ENCODE measurements at regions of chr11 and their contacts with region 1.

Region 1: GRCh38 chr11:43880640-43881159 is at the start of gene ALKBH3:
- H3K4me3 Mint-ChIP-seq: peak within 1 kb of the TSS; percentile 88
- H3K27ac Mint-ChIP-seq: peak within 1 kb of the TSS; percentile 88
- H3K4me1 Mint-ChIP-seq: peaks cover 14% of the 10 kb centered on the region
- H3K27me3 Mint-ChIP-seq: peaks cover 26% of the 10 kb centered on the region

Region 2: GRCh38 chr11:43643898-43644620 is 236.6 kb before region 1 on chr11:
- intact Hi-C with region 1: loop called (anchors 2 kb)
- H3K4me3 Mint-ChIP-seq: peak overlapping the region; percentile 96
- H3K27ac Mint-ChIP-seq: peak overlapping the region; percentile 91
- H3K4me1 Mint-ChIP-seq: peaks cover 11% of the 10 kb centered on the region
- H3K27me3 Mint-ChIP-seq: peaks cover 12% of the 10 kb centered on the region

Region 3: DNA sequence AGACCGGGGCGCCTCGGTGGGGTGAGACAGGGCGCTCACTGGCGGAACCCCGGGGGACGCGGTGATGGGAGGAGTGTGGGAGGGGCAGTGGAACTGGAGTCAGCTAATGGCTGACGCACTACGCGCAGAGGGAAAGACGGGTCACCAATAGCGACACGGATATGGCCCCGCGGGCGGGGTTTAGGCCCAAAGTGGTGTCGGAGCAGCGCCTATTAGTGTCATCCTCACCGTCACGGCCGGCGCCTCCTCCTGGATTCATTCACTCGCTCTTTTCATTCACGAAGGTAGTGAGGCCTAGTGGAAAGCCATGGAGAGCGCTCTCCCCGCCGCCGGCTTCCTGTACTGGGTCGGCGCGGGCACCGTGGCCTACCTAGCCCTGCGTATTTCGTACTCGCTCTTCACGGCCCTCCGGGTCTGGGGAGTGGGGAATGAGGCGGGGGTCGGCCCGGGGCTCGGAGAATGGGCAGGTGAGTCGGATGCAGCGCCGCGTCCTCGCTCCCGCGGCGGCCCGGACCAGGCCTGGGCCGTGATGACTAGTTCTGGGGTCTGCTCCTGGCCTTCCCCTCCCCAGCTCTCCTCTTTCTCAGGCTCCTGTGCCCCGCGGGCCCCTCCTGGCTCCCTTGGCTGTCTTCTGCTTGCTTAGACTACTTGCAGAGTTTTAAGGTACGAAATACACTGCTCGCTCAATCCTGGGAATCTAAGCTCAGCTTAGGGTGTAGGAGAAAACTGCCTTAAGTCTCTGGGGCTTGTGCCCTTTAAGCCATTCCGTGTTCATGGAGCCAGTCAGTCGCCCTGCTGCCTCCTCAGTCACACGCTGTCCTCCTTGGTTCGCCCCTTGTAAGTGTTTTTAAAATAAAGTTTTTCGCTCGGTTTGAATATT is 199.9 kb before region 1 on chr11 and contains the start of gene HSD17B12:
- intact Hi-C with region 1: loop called (anchors 1 kb)
- H3K4me3 Mint-ChIP-seq: peak within 1 kb of the TSS; percentile 90
- H3K27ac Mint-ChIP-seq: peak within 1 kb of the TSS; percentile 98
- H3K4me1 Mint-ChIP-seq: peaks cover 24% of the 10 kb centered on the region
- H3K27me3 Mint-ChIP-seq: peaks cover 13% of the 10 kb centered on the region

Region 4: DNA sequence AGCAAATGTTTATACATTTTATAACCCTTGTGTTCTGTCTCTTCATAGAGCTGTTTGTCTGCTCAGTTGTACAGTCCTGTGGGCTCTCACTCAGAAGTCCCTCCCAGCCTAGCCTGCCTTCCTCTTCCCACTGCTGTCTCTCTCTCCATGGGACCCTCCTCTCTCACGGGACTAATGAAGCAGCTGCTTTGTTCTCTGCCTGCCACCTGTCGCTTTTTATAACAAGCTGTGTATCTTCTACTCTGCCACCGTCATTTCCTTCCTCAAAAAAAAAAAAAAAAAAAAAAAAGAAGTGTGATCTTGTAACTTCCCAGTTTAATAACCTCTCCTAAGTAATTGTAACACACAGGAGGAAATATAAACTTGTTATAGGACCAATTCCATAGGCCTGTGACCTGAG is 92.3 kb before region 1 on chr11:
- intact Hi-C with region 1: loop called (anchors 5 kb)
- H3K4me3 Mint-ChIP-seq: peak overlapping the region; percentile 50
- H3K27ac Mint-ChIP-seq: peak overlapping the region; percentile 87
- H3K4me1 Mint-ChIP-seq: peaks cover 19% of the 10 kb centered on the region
- H3K27me3 Mint-ChIP-seq: no peaks in the 10 kb centered on the region

Region 5: GRCh38 chr11:43868852-43869567 is 11.7 kb before region 1 on chr11:
- intact Hi-C with region 1: no loop called
- H3K4me3 Mint-ChIP-seq: no peak overlapping the region
- H3K27ac Mint-ChIP-seq: no peak overlapping the region
- H3K4me1 Mint-ChIP-seq: peaks cover 14% of the 10 kb centered on the region
- H3K27me3 Mint-ChIP-seq: peaks cover 36% of the 10 kb centered on the region

Region 6: DNA sequence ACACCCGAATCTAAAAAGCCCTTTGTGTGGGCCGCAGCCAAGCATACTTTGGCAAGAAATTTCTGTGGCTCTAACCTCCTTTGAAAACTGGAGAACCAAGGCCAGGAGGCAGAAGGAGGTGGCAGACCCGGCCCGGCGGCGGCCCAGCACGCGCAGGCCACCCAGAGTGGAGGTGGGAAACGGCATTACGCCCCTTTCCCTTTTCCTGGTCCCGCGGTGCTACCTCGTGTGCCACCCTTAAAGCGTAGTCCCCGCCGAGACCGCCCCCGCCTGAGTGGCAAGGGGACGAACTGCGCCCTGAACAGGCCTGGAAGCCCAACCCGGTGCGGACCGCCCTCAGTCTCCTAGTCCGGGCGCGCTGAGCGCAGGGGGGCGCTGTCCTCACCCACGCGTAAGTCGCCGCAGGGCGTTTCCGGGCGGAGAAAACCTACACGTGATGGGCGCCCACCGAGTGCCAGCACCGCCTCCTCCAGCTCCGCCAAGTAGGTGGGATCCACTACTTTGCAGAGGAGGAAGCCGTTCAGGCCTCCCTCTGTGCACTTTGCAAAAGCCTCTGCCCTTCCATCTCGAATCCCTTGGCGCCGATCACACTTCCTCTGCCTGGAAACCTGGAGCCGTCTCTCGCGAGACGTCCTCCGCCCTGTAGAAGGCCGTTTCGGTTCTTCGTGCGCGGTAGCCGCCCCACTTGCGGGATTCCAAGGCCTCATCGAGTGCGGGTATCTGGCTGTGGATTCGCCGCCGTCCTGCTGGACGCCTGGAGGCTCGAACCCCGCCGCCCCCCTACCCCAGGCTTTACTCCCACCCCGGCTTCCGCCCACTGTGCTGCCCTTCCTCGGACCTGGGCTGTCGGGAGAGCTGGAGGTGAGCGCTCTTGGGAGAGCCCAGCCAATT is 185.4 kb after region 1 on chr11 and contains the start of gene ACCS:
- intact Hi-C with region 1: loop called (anchors 2 kb)
- H3K4me3 Mint-ChIP-seq: peak within 1 kb of the TSS; percentile 91
- H3K27ac Mint-ChIP-seq: peak within 1 kb of the TSS; percentile 98
- H3K4me1 Mint-ChIP-seq: peaks cover 26% of the 10 kb centered on the region
- H3K27me3 Mint-ChIP-seq: peaks cover 5% of the 10 kb centered on the region